HEK293T (cell line): ENCODE measurements at regions of chr2 and their contacts with region 1.

Region 1: DNA sequence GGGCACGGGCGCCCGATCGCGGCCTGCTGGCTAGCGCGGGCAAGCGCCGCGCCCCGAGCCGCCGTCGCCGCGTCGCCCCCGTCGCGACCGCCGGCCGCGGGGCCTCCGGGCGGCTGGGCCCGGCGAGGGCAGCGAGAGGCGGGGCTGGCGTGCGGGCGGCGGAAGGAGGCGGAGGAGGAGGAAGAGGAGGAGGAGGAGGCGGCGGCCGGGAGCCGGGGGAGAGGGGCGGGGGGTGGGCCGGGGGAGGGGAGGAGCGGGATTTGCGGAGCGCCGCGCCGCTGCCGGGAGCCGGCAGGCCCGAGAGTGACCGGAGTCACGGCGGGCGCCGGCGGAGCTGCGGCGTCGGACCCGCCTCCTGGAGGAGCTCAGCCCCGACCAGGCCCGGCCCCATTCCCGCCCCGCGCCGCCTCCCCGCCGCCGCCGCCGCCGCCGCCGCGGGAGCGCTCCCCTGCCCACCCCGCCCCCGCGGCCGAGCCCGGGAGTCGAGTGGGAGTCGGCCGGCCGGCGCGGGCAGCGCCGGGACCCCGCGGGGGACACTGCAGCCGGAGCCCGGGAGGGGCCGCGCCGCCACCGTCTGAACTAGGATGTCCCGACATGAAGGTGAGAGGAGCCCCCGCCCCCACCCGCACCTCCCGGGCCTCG is at the start of gene KCMF1:
- DNase-seq: peak; percentile 77

Region 2: DNA sequence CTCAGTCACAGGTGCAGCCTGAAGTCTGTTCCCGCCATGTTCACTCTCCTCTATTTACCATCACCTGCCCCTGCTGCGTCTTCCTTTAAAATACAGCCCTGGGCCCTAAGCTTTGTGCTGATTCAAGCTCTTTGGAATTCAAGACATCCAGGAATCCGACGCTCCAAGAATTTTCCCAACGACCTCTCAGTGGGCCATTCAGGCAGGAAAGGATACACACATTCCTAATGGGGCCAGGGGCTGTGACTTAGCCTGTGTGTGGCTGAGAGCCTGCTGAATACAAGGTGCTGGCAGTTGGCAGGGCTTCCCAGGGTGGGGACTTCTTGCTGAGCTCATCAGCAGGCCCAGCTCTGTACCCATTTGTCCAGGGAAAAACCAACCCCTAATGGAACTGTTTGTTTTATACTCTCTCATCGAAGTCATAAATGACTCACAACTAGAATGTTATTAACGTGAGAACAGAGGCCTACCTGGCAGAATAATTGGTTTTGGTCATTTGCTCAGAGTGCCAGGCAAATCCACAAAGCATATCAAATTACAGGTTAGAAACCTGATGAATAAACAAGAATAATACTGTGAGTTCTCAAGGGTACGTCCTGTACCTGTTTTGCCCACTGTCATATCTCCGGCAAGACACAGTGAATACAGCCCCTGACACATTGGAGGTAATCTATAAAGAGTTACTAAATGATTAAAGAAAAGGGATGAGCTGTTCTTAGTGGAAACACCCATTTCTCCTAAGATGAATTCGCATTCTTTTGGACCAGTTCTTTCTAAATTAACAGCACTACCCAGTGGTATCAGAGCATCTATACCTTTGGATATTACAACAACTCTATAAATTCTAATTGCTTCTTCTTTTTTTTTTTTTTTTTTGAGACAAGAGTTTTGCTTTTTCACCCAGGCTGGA is 12.6 kb before region 1 on chr2:
- CTCF ChIA-PET with region 1: no interaction called
- POLR2A ChIA-PET with region 1: interaction called, 11 read pairs
- DNase-seq: peak; percentile 37

Region 3: DNA sequence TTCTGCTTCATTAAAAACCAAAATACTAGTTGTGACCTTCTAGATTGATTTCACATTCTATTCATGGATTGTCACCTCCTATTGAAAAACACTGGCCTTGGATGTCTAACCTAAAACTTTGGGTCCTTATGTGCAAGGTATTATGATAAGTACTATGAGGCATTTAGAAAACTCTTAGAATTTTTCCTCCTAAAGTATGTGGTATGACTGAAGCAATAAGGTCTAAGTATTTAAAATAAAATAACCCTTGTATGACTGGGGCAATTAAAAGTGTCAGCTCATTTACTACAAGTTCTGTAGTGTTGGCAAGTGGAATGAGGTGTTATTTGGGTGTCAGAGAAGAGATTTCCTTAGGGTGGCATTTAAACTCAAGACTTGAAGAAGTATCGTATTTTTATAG is 15.0 kb after region 1 on chr2:
- CTCF ChIA-PET with region 1: no interaction called
- POLR2A ChIA-PET with region 1: no interaction called
- DNase-seq: no peak